ENCODE measurements at regions of chr1 and their contacts with region 1.

Region 1: GRCh38 chr1:32650752-32651460 is at the start of gene RBBP4:
- DNase-seq: peak; percentile 95 to 99
- H3K4me3 ChIP-seq: peak within 1 kb of the TSS; percentile 69 to 74
- H3K27ac ChIP-seq: peak within 1 kb of the TSS; percentile 91 to 95
- H3K4me1 ChIP-seq: peaks cover 0 to 61% (median 36%) of the 10 kb centered on the region in 4 donors
- H3K27me3 ChIP-seq: no peaks in the 10 kb centered on the region
- CTCF ChIP-seq: peak in 1 of 2 experiments; percentile 15

Region 2: DNA sequence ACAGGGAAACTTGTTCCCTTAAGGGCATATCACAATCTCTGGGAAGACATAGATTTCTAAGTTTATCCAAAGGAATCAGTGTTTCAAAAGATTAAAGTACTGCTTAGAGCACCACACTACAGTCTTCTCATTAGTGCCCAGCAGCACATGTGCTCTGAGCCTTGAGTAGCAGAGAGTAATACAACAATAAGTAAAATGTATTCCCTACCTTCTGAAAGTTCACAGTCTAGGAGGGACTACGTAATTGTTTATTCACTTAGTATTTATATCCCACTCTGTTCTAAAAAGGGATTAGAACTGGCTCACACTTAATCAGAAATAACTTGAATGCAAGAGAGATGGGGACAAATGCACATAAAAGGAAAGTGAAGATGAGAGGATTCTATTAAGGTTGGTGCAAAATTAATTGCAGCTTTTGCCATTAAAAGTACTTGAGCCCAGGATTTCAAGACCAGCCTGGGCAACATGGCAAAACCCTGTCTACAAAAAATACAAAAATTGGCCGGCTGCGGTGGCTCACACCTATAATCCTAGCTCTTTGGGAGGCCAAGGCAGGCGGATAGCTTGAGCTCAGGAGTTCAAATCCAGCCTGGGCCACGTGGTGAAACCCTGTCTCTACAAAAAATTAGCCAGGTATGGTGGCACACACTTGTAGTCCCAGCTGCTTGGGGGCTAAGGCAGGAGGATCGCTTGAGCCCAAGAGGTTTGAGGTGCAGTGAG is 42.7 kb after region 1 on chr1:
- intact Hi-C with region 1: loop called (anchors 5 kb)
- DNase-seq: no peak
- H3K4me3 ChIP-seq: peak overlapping the region in 1 of 2 donors; percentile 5
- H3K27ac ChIP-seq: peak overlapping the region; percentile 67 to 79
- H3K4me1 ChIP-seq: peaks cover 0 to 42% (median 30%) of the 10 kb centered on the region in 4 donors
- H3K27me3 ChIP-seq: no peaks in the 10 kb centered on the region
- CTCF ChIP-seq: no peak

Region 3: GRCh38 chr1:32703479-32704291 is 52.8 kb after region 1 on chr1:
- intact Hi-C with region 1: no loop called
- DNase-seq: peak; percentile 42 to 88
- H3K4me3 ChIP-seq: peak overlapping the region; percentile 73
- H3K27ac ChIP-seq: peak overlapping the region; percentile 95 to 98
- H3K4me1 ChIP-seq: peaks cover 0 to 70% (median 41%) of the 10 kb centered on the region in 4 donors
- H3K27me3 ChIP-seq: no peaks in the 10 kb centered on the region
- CTCF ChIP-seq: no peak

Region 4: DNA sequence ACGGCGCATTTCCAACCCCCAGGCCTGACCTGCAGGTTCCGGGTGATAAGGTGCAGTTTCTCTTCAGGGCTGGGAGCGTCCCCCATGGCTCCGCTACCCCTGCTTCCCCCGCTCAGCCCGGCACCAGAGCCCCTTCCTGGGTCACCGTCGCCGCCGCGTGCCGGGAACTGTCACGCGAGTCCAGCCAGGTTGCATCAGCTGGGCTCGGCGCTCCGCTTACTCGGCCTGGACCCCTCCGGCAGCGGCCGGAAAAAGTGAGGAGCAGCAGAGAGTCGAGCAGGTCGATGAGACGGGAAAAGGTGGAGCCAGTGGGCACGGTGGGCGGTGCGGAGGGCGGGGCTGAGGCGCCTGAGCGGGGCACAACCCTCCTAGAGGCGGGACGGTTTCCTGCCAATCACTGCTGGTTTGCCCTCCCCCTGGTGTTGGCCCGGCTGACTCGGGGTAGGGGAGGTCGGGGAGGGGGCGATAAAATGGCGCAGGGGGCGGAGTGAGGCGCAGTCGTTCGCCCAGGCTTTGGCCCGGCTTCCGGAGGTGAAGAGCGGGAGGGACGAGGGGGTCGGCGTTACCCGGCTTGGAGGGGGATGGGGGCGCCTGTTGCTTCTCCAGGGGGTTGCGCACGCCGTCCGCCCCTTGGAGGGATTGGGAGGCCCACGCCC is 166.4 kb after region 1 on chr1 and contains the starts of genes S100PBP and YARS1:
- intact Hi-C with region 1: loop called (anchors 5 kb)
- DNase-seq: peak; percentile 99 to 100
- H3K4me3 ChIP-seq: peak within 1 kb of the TSS; percentile 91 to 98
- H3K27ac ChIP-seq: peak within 1 kb of the TSS; percentile 88 to 99
- H3K4me1 ChIP-seq: peaks cover 0 to 47% (median 37%) of the 10 kb centered on the region in 4 donors
- H3K27me3 ChIP-seq: no peaks in the 10 kb centered on the region
- CTCF ChIP-seq: peak in 1 of 2 experiments; percentile 31

Measured in tibial artery (tissue), 4 donors.